WTC11 (cell line): ENCODE measurements at regions of chr11 and their contacts with region 1.

Region 1: GRCh38 chr11:62841361-62842184 is 2.2 kb upstream of the WDR74 start:
- DNase-seq: peak; percentile 87
- ATAC-seq: peak; percentile 77
- H3K4me3 Mint-ChIP-seq: no peak overlapping the region
- H3K27ac Mint-ChIP-seq: no peak overlapping the region
- H3K4me1 Mint-ChIP-seq: peaks cover 15% of the 10 kb centered on the region
- H3K27me3 Mint-ChIP-seq: no peaks in the 10 kb centered on the region
- CTCF ChIP-seq: no peak

Region 2: GRCh38 chr11:62726915-62727763 is 114.4 kb before region 1 on chr11 and contains the start of gene HNRNPUL2:
- CTCF ChIA-PET with region 1: no interaction called
- POLR2A ChIA-PET with region 1: interaction called, 17 read pairs
- DNase-seq: peak; percentile 98
- ATAC-seq: peak; percentile 89
- H3K4me3 Mint-ChIP-seq: peak within 1 kb of the TSS; percentile 98
- H3K27ac Mint-ChIP-seq: peak within 1 kb of the TSS; percentile 100
- H3K4me1 Mint-ChIP-seq: peaks cover 25% of the 10 kb centered on the region
- H3K27me3 Mint-ChIP-seq: peaks cover 4% of the 10 kb centered on the region; the same call in 1 of the 2 replicates
- CTCF ChIP-seq: no peak
- total RNA-seq, gene HNRNPUL2: 42.1 to 42.9 TPM (median 42.2 TPM) in 3 replicates

Region 3: DNA sequence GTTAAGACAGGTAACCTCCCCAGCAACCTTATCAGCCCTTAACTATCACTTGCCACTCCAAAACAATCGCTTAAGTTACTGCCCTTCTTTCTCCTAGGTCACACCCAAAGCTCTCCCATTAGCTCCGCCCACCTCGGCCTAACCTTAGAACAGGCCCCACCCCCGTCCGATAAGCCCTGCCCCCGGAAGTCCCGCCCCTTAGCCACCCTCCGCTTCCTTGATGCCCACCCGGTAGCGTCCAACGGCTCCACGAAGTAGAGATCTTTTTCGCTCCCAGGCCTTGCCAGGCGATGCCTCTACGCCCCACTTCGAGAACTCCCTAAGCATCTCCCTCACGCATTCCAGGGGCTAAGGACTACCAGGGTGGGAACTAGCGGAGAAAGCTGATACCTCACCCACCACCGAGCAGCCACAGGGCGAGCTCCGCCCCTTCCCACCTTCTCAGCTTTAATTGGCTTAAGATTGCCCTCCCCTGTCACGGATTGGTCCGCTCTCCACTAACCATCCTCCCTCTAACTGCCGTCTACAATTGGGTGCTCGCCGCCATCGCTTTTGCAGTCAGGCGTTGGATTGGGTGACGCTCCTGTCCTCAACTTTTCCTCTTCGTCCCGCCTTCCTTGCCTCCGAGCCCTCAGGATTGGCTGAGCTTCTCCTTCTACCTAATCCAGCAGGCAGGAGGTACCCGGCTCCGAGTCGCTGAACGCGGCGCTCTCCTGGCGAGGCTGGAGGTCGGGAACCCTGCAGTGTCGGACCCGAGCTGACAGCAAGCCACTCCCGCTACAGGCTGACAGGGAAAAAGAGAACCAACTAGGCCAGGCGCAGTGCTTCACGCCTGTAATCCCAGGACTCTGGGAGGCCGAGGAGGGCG is 87.6 kb before region 1 on chr11 and contains the start of gene ZBTB3:
- CTCF ChIA-PET with region 1: no interaction called
- POLR2A ChIA-PET with region 1: interaction called, 14 read pairs
- DNase-seq: peak; percentile 97
- ATAC-seq: peak; percentile 91
- H3K4me3 Mint-ChIP-seq: peak within 1 kb of the TSS; percentile 95
- H3K27ac Mint-ChIP-seq: peak within 1 kb of the TSS; percentile 99
- H3K4me1 Mint-ChIP-seq: peaks cover 28% of the 10 kb centered on the region
- H3K27me3 Mint-ChIP-seq: no peaks in the 10 kb centered on the region; the same call in 1 of the 2 replicates
- CTCF ChIP-seq: no peak
- total RNA-seq, gene ZBTB3: 82.3 to 88.1 TPM (median 88.0 TPM) in 3 replicates

Region 4: DNA sequence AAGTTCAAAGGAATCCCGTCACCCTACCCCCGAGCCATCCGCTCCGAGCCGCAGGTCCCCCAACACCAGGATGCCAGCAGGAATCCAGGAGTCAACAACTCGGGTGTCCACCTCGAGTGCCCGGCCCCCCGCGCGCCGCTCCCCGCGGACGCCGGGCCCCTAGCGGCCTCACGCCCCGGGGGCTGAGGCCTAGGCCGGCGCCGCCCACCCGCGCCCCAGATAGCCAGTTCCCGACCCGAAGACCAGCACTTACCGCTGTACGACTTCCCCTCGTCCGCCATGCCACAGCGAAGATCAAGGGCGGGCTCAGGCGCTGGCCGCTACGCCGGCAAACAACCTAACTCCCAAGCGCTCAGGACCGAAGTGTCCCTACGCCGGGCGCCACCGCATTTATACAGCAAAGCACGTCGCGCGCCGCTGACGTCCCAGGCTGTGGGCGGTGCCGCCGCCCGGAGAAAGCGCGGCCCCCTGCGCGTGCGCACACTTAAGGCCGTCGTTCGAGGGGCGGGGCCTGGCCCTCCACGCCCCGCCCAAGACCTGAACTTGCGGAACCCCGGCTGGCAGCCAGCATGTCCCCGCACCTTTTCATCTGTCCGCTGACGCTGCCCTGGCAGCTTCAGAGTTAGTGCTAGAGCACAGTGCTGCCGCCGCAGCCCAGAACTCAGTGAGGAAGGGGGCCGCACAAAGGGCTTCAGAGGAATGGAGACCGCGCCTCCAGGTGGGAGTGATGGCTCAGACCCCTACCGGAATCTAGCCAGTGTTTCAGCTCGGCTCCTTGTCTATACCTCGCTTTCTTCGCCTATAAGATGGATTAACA is 36.3 kb before region 1 on chr11 and contains the start of gene NXF1:
- CTCF ChIA-PET with region 1: no interaction called
- POLR2A ChIA-PET with region 1: interaction called, 15 read pairs
- DNase-seq: peak; percentile 95
- ATAC-seq: peak; percentile 85
- H3K4me3 Mint-ChIP-seq: peak within 1 kb of the TSS; percentile 98
- H3K27ac Mint-ChIP-seq: peak within 1 kb of the TSS; percentile 96
- H3K4me1 Mint-ChIP-seq: peaks cover 22% of the 10 kb centered on the region
- H3K27me3 Mint-ChIP-seq: no peaks in the 10 kb centered on the region
- CTCF ChIP-seq: no peak
- total RNA-seq, gene NXF1: 43.2 to 44.7 TPM (median 44.3 TPM) in 3 replicates

Region 5: GRCh38 chr11:62880803-62881578 is 39.4 kb after region 1 on chr11 and contains the start of gene SLC3A2:
- CTCF ChIA-PET with region 1: interaction called, 4 read pairs
- POLR2A ChIA-PET with region 1: interaction called, 24 read pairs
- DNase-seq: peak; percentile 87
- ATAC-seq: peak; percentile 80
- H3K4me3 Mint-ChIP-seq: peak within 1 kb of the TSS; percentile 99
- H3K27ac Mint-ChIP-seq: peak within 1 kb of the TSS; percentile 100
- H3K4me1 Mint-ChIP-seq: peaks cover 49% of the 10 kb centered on the region
- H3K27me3 Mint-ChIP-seq: peaks cover 3% of the 10 kb centered on the region; the same call in 1 of the 2 replicates
- CTCF ChIP-seq: peak; percentile 22; the same call in 1 of the 2 replicates
- total RNA-seq, gene SLC3A2: 244 to 334 TPM (median 265 TPM) in 3 replicates